Aorta (tissue), 5 donors: ENCODE measurements at regions of chr4 and their contacts with region 1.

Region 1: GRCh38 chr4:373062-373839 is 35.6 kb downstream of the ZNF141 start:
- DNase-seq: no peak
- ATAC-seq: no peak
- H3K4me3 ChIP-seq: no peak overlapping the region
- H3K27ac ChIP-seq: no peak overlapping the region
- H3K4me1 ChIP-seq: no peaks in the 10 kb centered on the region
- H3K27me3 ChIP-seq: no peaks in the 10 kb centered on the region

Region 2: DNA sequence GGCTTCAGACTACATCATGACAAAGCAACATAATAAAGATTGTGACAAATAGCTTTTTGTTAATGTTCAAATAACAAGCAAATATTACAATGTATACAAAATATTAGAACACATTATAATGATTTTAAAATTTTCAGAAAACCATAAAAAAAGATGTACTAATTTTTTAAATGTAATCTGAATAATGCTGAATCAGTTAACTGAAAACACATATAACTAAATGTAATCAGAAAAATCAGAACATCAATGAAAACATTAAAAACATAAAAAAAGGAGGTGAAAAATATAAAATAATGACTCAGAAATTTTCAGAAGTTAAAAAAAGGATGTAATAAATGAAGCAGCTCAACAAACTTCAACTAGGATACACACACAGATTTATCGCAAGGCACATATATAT is 72.2 kb after region 1 on chr4:
- intact Hi-C with region 1: loop called in 1 of 2 experiments (anchors 10 kb)
- DNase-seq: no peak
- ATAC-seq: no peak
- H3K4me3 ChIP-seq: no peak overlapping the region
- H3K27ac ChIP-seq: no peak overlapping the region
- H3K4me1 ChIP-seq: no peaks in the 10 kb centered on the region
- H3K27me3 ChIP-seq: no peaks in the 10 kb centered on the region